Panc1 (cell line): ENCODE measurements at regions of chr2 and their contacts with region 1.

Region 1: GRCh38 chr2:39607538-39608265 is 58.0 kb upstream of the TMEM178A start:
- DNase-seq: no peak
- ATAC-seq: no peak
- H3K4me3 ChIP-seq: no peak overlapping the region
- H3K27ac ChIP-seq: no peak overlapping the region
- H3K4me1 ChIP-seq: no peaks in the 10 kb centered on the region
- H3K27me3 ChIP-seq: peaks cover 5% of the 10 kb centered on the region; the same call in 1 of the 2 replicates
- CTCF ChIP-seq: no peak

Region 2: GRCh38 chr2:39494784-39495251 is 112.9 kb before region 1 on chr2:
- CTCF ChIA-PET with region 1: no interaction called
- POLR2A ChIA-PET with region 1: interaction called, 12 read pairs
- in situ Hi-C with region 1: no loop called
- intact Hi-C with region 1: no loop called
- DNase-seq: no peak
- ATAC-seq: peak; percentile 82
- H3K4me3 ChIP-seq: no peak overlapping the region
- H3K27ac ChIP-seq: peak overlapping the region; percentile 23; the same call in 1 of the 2 replicates
- H3K4me1 ChIP-seq: peaks cover 4% of the 10 kb centered on the region; the same call in 1 of the 2 replicates
- H3K27me3 ChIP-seq: no peaks in the 10 kb centered on the region
- CTCF ChIP-seq: no peak

Region 3: GRCh38 chr2:39642051-39642742 is 34.5 kb after region 1 on chr2:
- CTCF ChIA-PET with region 1: no interaction called
- POLR2A ChIA-PET with region 1: no interaction called
- in situ Hi-C with region 1: no loop called
- intact Hi-C with region 1: no loop called
- DNase-seq: peak; percentile 25
- ATAC-seq: peak; percentile 75
- H3K4me3 ChIP-seq: no peak overlapping the region
- H3K27ac ChIP-seq: no peak overlapping the region
- H3K4me1 ChIP-seq: no peaks in the 10 kb centered on the region
- H3K27me3 ChIP-seq: no peaks in the 10 kb centered on the region; the same call in 1 of the 2 replicates
- CTCF ChIP-seq: no peak

Region 4: DNA sequence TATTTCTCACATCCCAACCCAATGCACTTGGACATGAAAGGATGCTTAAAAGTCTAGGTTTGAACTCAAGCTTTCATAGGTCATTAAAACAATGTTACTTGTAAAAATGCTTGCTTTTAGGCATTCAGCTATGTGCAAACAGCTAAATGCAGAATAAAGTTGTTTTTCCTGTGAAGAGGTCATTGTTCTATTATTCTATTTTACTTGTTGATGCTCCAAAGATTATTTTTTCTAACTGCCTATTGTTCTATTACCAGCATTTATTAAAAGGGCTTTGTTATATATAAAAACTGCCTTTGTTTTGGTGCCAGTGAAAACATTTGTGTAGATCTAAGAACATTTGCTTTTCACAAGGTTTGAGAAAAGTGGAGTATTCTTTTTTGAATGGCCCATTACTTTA is 107.4 kb after region 1 on chr2:
- CTCF ChIA-PET with region 1: no interaction called
- POLR2A ChIA-PET with region 1: no interaction called
- in situ Hi-C with region 1: no loop called
- intact Hi-C with region 1: no loop called
- DNase-seq: no peak
- ATAC-seq: no peak
- H3K4me3 ChIP-seq: no peak overlapping the region
- H3K27ac ChIP-seq: no peak overlapping the region
- H3K4me1 ChIP-seq: no peaks in the 10 kb centered on the region
- H3K27me3 ChIP-seq: peaks cover 12% of the 10 kb centered on the region; the same call in 1 of the 2 replicates
- CTCF ChIP-seq: no peak

Region 5: GRCh38 chr2:39728941-39729351 is 121.2 kb after region 1 on chr2:
- CTCF ChIA-PET with region 1: no interaction called
- POLR2A ChIA-PET with region 1: no interaction called
- in situ Hi-C with region 1: no loop called
- intact Hi-C with region 1: no loop called
- DNase-seq: no peak
- ATAC-seq: 0 out of 2 replicates have a peak, but pooled peaks have one; percentile 55
- H3K4me3 ChIP-seq: no peak overlapping the region
- H3K27ac ChIP-seq: no peak overlapping the region
- H3K4me1 ChIP-seq: no peaks in the 10 kb centered on the region
- H3K27me3 ChIP-seq: no peaks in the 10 kb centered on the region
- CTCF ChIP-seq: peak; percentile 91

Region 6: DNA sequence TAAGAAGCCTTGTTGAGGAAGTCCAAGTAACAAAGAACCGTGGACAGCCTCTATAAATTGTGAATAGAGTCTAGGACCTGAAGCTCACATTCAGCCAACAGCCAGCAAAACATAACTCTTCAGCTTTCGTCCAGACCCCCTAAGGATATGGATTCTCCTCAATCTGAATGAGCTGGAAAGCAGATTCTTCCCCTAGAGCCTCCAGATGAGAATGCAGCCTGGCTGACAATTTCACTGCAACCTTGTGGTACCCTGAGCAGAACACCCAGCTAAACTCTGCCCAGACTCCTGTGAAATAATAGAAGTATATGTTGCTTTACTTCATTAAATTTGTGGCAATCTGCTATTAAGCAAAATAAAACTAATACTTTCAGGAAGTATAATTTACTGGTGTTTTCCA is 1327.6 kb after region 1 on chr2:
- CTCF ChIA-PET with region 1: no interaction called
- POLR2A ChIA-PET with region 1: no interaction called
- in situ Hi-C with region 1: no loop called
- intact Hi-C with region 1: no loop called
- DNase-seq: no peak
- ATAC-seq: no peak
- H3K4me3 ChIP-seq: no peak overlapping the region
- H3K27ac ChIP-seq: no peak overlapping the region
- H3K4me1 ChIP-seq: no peaks in the 10 kb centered on the region
- H3K27me3 ChIP-seq: no peaks in the 10 kb centered on the region
- CTCF ChIP-seq: no peak